Breast epithelium (tissue), 4 donors: ENCODE measurements at regions of chr4 and their contacts with region 1.

Region 1: GRCh38 chr4:153318696-153319320 is 25.7 kb upstream of the MND1 start:
- DNase-seq: no peak
- H3K4me3 ChIP-seq: no peak overlapping the region
- H3K27ac ChIP-seq: no peak overlapping the region
- H3K4me1 ChIP-seq: no peaks in the 10 kb centered on the region
- H3K27me3 ChIP-seq: no peaks in the 10 kb centered on the region
- CTCF ChIP-seq: peak; percentile 32 to 75 (median 38)
- POLR2A ChIP-seq: no peak

Region 2: GRCh38 chr4:153232768-153233167 is 86.0 kb before region 1 on chr4:
- intact Hi-C with region 1: loop called (anchors 10 kb)
- DNase-seq: no peak
- H3K4me3 ChIP-seq: no peak overlapping the region
- H3K27ac ChIP-seq: peak overlapping the region in 1 of 2 donors; percentile 13
- H3K4me1 ChIP-seq: peaks cover 4 to 16% of the 10 kb centered on the region in 2 donors
- H3K27me3 ChIP-seq: no peaks in the 10 kb centered on the region
- CTCF ChIP-seq: no peak
- POLR2A ChIP-seq: no peak